ENCODE measurements at regions of chr16 and their contacts with region 1.

Region 1: DNA sequence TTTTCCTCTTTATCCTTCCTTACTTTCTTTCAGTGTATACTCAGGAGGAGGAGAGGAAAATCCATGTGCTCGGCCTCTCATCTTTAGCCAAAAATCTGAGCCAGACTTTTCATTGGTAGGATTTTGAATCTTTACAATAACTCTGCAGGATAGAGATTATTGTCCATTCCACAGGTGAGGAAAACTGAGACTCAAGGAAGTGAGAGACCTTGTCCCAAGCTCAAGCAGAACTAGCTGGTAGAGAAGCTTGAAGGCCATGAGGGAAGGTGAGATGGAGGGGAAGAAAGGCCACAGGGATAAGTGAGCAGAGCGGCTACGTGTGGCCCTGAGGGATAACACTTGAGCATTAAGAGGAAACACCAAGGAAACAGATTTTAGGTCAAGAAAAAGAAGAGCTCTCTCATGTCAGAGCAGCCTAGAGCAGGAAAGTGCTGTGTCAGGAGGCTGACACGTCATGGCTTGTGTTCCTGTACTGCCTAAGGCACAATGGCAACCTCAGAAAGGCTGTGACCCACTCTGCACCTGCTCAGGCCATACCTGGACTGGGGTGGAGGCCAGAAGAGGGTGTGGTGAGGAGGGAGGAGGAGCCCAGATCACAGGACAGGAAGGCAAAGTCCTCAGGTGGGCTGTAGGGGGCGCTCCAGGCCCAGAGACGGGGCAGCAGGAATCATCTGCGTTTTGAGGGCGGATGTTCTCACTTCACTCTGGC is 11.9 kb downstream of the MT4 start:
- DNase-seq: peak; percentile 91
- H3K4me3 Mint-ChIP-seq: no peak overlapping the region
- H3K27ac Mint-ChIP-seq: no peak overlapping the region
- H3K4me1 Mint-ChIP-seq: peaks cover 8% of the 10 kb centered on the region
- H3K27me3 Mint-ChIP-seq: peaks cover 14% of the 10 kb centered on the region

Region 2: DNA sequence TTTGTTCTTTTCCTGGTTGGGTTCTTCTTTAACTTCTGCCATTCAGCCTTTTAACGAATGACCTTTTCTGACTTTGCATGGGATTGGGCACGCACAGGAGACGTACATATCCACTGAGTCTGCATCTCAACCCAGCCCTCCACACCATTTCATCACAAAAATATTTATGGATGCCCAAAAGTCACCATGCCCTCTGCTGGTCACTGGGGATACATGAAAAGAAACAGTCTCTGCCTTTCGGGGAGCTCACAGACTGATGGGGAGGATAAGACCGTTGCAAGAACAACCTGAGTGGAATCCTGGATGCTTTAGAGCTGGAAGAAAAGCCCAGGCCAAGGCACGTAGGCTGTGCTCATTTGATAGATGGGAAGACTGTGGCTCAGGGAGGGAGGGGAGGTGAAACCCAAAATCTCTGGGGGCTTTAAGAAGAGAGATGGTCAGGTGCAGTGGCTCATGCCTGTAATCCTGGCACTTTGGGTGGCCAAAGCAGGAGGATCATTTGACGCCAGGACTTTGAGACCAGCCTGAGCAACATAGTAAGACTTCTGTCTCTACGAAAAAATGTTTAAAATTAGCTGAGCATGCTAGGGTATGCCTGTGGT is 23.8 kb after region 1 on chr16:
- CTCF ChIA-PET with region 1: interaction called, 17 read pairs
- POLR2A ChIA-PET with region 1: interaction called, 3 read pairs
- DNase-seq: peak; percentile 42
- H3K4me3 Mint-ChIP-seq: no peak overlapping the region
- H3K27ac Mint-ChIP-seq: no peak overlapping the region
- H3K4me1 Mint-ChIP-seq: peaks cover 8% of the 10 kb centered on the region
- H3K27me3 Mint-ChIP-seq: peaks cover 33% of the 10 kb centered on the region

Region 3: DNA sequence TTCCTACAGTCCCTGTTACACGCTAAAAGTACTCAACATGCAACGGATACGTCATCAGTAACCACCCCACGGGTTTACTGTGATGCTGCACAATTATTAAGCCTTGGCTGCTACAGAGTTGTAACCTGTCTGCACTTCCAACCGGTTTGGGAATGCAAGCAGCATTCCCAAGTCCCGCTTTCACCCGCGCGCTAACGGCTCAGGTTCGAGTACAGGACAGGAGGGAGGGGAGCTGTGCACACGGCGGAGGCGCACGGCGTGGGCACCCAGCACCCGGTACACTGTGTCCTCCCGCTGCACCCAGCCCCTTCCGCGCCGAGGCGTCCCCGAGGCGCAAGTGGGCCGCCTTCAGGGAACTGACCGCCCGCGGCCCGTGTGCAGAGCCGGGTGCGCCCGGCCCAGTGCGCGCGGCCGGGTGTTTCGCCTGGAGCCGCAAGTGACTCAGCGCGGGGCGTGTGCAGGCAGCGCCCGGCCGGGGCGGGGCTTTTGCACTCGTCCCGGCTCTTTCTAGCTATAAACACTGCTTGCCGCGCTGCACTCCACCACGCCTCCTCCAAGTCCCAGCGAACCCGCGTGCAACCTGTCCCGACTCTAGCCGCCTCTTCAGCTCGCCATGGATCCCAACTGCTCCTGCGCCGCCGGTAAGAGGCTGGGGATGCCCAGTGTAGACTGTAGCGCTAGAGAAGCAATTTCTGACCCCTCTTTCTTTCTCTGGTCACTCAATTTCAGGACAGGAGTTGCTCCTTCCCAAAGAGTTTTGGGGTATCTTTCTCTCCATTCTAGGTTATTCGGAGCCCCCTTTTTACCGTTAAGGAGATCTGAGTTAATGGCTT is 31.5 kb after region 1 on chr16 and contains the start of gene MT2A:
- CTCF ChIA-PET with region 1: interaction called, 11 read pairs
- POLR2A ChIA-PET with region 1: interaction called, 4 read pairs
- DNase-seq: peak; percentile 93
- H3K4me3 Mint-ChIP-seq: peak within 1 kb of the TSS; percentile 93
- H3K27ac Mint-ChIP-seq: peak within 1 kb of the TSS; percentile 78
- H3K4me1 Mint-ChIP-seq: peaks cover 43% of the 10 kb centered on the region
- H3K27me3 Mint-ChIP-seq: peaks cover 2% of the 10 kb centered on the region
- total RNA-seq, gene MT2A: 47.9 to 51.4 TPM